Heart right ventricle (tissue), 16 donors: ENCODE measurements at regions of chr15 and their contacts with region 1.

Region 1: DNA sequence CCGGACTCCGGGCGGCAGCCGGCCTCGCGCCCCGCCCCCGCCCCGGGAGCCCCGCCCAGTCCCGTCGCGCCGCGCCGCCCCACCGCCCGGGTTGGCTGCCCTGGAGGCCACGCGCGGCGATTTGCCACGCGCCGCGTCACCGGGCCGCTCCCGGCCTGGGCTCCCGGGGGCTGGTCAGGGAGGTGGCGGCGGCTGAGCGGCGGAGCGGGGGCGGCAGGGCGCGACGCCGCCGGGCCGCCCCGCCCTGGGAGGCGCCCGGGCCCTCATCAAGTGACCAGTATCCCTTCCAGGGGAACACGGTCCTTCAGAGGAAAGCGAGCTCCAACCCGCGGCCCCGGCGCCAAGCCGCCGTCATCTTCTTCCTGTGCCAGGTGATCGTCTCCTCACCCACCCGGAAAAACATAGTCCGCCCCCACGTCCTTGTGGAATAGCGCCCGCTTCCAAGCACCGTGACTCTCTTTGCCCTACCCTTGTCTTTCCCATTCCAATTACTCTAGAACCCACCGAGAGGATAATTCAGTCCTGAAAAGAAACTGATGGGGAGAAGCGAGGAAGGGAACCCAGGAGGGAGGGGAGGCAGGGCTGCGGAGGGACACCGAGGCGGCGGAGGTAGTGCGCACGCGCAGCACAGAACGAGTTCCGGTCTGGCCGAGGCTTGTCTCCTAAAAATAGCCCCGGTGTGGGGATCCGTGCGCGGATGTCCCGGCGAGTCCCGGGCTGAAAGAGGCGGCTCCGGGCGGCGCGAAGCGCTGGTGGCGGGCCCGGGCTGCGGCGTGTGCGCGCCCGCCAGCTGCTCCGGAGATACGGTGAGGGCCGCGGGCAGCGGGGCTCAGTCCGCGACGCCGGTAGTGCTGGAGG is at the start of gene MEF2A:
- DNase-seq: peak; percentile 96 to 97
- ATAC-seq: peak; percentile 83 to 91 (median 86)
- H3K4me3 ChIP-seq: peak within 1 kb of the TSS; percentile 68 to 91 (median 84)
- H3K27ac ChIP-seq: peak within 1 kb of the TSS; percentile 93 to 100 (median 99)
- H3K4me1 ChIP-seq: peaks cover 6 to 62% (median 42%) of the 10 kb centered on the region in 9 donors
- H3K27me3 ChIP-seq: no peaks in the 10 kb centered on the region
- CTCF ChIP-seq: no peak
- total RNA-seq, gene MEF2A: 121 to 194 (median 173) TPM

Region 2: GRCh38 chr15:99409097-99409473 is 156.4 kb before region 1 on chr15:
- intact Hi-C with region 1: loop called in 7 of 10 experiments (anchors 2 to 10 kb)
- DNase-seq: peak; percentile 69 to 70
- ATAC-seq: peak; percentile 82 to 94 (median 90)
- H3K4me3 ChIP-seq: no peak overlapping the region
- H3K27ac ChIP-seq: peak overlapping the region; percentile 1 to 68 (median 52)
- H3K4me1 ChIP-seq: peaks cover 14 to 27% (median 22%) of the 10 kb centered on the region in 9 donors
- H3K27me3 ChIP-seq: no peaks in the 10 kb centered on the region
- CTCF ChIP-seq: peak; percentile 34 to 79 (median 65)

Region 3: DNA sequence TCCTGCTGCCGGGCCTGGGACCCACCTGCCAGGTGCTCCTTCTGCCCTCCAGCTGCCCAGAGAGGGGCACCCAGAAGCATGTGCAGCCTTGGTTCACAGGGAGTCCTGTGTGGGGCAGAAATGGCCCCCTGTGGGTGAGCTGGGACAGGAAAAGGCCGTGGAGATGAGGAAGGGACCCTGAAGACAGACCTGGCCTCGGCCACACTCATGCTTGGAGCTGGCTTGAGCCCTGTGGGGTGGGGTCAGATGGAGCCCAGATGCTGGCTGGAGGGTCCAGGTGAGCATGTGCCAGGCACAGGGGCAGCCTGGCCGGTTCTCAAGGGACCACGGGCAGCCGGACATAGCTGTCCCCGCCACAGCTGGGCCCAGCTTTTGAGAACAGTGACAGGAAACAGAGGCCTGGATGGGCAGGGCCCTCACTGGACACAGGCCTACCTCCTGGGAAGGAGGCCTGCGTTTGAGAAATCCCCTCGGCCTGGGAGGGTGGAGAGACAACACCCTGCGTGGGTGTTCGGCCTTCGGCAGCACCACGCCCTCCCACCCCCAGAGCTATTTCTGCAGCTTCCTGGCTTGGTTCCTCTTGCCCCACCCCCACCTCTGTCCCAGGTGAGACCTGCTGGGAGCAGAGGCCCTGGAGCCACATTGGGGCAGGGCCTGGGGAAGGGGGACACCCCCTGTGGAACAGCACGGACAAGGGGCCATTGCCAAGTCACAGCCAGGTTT is 132.3 kb before region 1 on chr15:
- intact Hi-C with region 1: loop called in 3 of 10 experiments (anchors 5 to 10 kb)
- DNase-seq: peak in 1 of 2 donors; percentile 60
- ATAC-seq: peak; percentile 44 to 78 (median 60)
- H3K4me3 ChIP-seq: no peak overlapping the region
- H3K27ac ChIP-seq: peak overlapping the region in 9 of 10 donors; percentile 56 to 81 (median 72)
- H3K4me1 ChIP-seq: peaks cover 22 to 65% (median 53%) of the 10 kb centered on the region in 9 donors
- H3K27me3 ChIP-seq: no peaks in the 10 kb centered on the region
- CTCF ChIP-seq: peak in 1 of 9 donors; percentile 13

Region 4: DNA sequence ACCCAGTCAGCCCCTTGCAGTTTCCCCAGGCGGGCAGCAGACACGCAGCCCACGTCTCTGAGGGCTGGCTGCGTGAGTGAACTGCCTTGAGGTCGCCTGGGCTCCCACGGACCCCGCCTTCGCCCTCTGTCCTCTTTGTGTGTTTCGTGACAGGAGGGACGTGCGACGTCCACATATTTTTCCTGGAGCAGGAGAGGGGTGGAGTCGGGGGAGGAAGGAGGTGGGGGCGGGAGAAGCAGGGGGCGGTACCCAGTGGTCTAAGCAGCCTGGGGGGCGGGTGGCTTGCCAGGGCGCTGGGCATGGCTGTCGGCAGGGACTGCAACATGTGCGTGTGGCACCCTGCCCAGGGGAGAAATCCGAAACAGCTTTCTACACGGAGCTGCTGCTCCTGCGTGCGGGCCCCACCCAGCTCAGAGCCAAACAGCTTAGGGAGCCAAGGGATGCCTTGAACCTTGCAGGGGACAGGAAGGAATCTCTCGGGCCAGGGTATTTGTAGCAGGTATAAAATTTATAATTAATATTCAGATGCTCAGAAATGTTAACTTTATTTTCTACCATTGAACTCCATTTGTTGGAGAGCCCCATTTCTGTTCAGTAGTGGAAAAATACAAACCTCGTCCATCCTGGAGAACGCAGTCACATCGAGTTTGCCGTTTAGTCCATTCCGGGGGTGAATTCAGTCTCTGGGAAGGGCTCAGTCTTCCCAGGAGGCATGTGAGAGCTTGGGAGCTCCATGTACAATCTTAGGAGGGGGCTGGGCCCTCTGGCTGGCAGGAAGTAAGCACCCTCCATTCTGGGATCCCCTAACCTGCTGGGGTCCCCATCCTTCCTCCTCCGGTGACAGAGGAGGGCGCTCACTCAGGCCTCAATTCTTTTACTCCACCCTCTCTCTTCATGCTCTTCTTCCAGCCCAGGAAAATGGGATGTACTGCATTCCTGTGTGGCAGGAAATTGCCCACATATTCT is 78.9 kb before region 1 on chr15:
- intact Hi-C with region 1: loop called in 2 of 10 experiments (anchors 1 to 5 kb)
- DNase-seq: peak; percentile 86 to 89
- ATAC-seq: peak; percentile 87 to 95 (median 94)
- H3K4me3 ChIP-seq: peak overlapping the region in 9 of 10 donors; percentile 6 to 53 (median 45)
- H3K27ac ChIP-seq: peak overlapping the region; percentile 60 to 92 (median 82)
- H3K4me1 ChIP-seq: peaks cover 12 to 37% (median 26%) of the 10 kb centered on the region in 9 donors
- H3K27me3 ChIP-seq: no peaks in the 10 kb centered on the region
- CTCF ChIP-seq: no peak

Region 5: GRCh38 chr15:99692825-99693224 is 127.3 kb after region 1 on chr15:
- intact Hi-C with region 1: loop called in 1 of 10 experiments (anchors 5 kb)
- DNase-seq: no peak
- ATAC-seq: peak in 4 of 8 donors; percentile 6 to 27 (median 20)
- H3K4me3 ChIP-seq: no peak overlapping the region
- H3K27ac ChIP-seq: peak overlapping the region in 3 of 10 donors; percentile 2 to 44 (median 31)
- H3K4me1 ChIP-seq: peaks cover 0 to 26% (median 10%) of the 10 kb centered on the region in 9 donors
- H3K27me3 ChIP-seq: no peaks in the 10 kb centered on the region
- CTCF ChIP-seq: no peak